Caco-2 (cell line): ENCODE measurements at regions of chr7 and their contacts with region 1.

Region 1: DNA sequence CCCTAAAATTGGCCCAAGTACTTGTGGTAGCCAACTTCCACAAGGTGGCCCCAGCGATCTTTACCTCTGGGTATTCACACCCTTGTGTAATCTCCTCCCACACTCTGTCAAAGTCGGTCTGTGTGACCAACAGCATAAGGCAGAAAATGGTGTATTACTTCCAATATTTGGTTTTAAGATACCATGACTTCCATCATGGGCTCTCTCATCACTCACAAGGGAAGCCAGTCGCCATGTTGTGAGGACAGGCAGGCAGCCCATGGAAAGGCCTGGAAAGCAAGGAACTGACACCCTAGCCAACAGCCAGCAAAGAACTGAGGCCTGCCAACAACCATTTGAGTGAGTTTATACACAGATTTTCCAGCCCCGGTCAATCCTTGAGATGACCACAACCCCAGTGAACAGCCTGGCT is 91.0 kb upstream of the KMT2E start:
- DNase-seq: peak; percentile 76 to 79
- H3K4me3 ChIP-seq: no peak overlapping the region
- H3K4me3 Mint-ChIP-seq: no peak overlapping the region
- H3K27ac Mint-ChIP-seq: no peak overlapping the region
- H3K4me1 ChIP-seq: peaks cover 23% of the 10 kb centered on the region
- H3K4me1 Mint-ChIP-seq: peaks cover 24% of the 10 kb centered on the region
- H3K27me3 ChIP-seq: no peaks in the 10 kb centered on the region
- H3K27me3 Mint-ChIP-seq: no peaks in the 10 kb centered on the region
- CTCF ChIP-seq: peak; percentile 73 to 91

Region 2: DNA sequence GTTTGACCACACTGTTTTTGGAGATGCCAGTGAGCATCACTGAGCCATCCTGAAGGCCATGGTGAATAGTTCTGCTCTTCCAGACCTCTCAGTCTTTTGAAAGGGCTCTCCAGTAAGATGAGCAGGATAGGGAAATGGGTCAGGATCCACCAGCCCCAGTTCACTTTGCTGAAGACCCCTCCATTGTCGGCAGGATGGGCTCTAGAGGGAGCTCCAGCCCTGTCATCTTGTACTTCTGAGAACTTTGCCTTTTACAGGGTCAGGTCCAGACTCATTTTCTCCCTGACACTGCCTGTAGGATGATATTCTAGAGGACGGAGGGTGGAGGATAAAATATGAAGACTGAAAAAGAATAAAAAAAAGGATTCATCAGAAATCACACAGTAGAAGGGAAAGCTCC is 581.5 kb before region 1 on chr7:
- CTCF ChIA-PET with region 1: no interaction called
- POLR2A ChIA-PET with region 1: no interaction called
- intact Hi-C with region 1: loop called (anchors 1 kb)
- DNase-seq: peak; percentile 39 to 48
- H3K4me3 ChIP-seq: no peak overlapping the region
- H3K4me3 Mint-ChIP-seq: no peak overlapping the region
- H3K27ac Mint-ChIP-seq: no peak overlapping the region
- H3K4me1 ChIP-seq: no peaks in the 10 kb centered on the region
- H3K4me1 Mint-ChIP-seq: no peaks in the 10 kb centered on the region
- H3K27me3 ChIP-seq: no peaks in the 10 kb centered on the region
- H3K27me3 Mint-ChIP-seq: peaks cover 5% of the 10 kb centered on the region
- CTCF ChIP-seq: peak; percentile 28 to 61

Region 3: GRCh38 chr7:104883718-104884452 is 39.1 kb before region 1 on chr7:
- CTCF ChIA-PET with region 1: interaction called, 51 read pairs
- POLR2A ChIA-PET with region 1: no interaction called
- intact Hi-C with region 1: loop called (anchors 1 kb)
- DNase-seq: peak; percentile 89 to 92
- H3K4me3 ChIP-seq: no peak overlapping the region
- H3K4me3 Mint-ChIP-seq: peak overlapping the region; percentile 51
- H3K27ac Mint-ChIP-seq: no peak overlapping the region
- H3K4me1 ChIP-seq: 0 out of 2 replicates have a peak, but pooled peaks cover 4% of the 10 kb centered on the region
- H3K4me1 Mint-ChIP-seq: peaks cover 6% of the 10 kb centered on the region
- H3K27me3 ChIP-seq: no peaks in the 10 kb centered on the region
- H3K27me3 Mint-ChIP-seq: peaks cover 3% of the 10 kb centered on the region
- CTCF ChIP-seq: peak; percentile 76 to 96

Region 4: GRCh38 chr7:105013221-105013815 is 90.3 kb after region 1 on chr7:
- CTCF ChIA-PET with region 1: no interaction called
- POLR2A ChIA-PET with region 1: no interaction called
- intact Hi-C with region 1: no loop called
- DNase-seq: peak; percentile 96
- H3K4me3 ChIP-seq: peak overlapping the region; percentile 100
- H3K4me3 Mint-ChIP-seq: peak overlapping the region; percentile 88
- H3K27ac Mint-ChIP-seq: peak overlapping the region; percentile 100
- H3K4me1 ChIP-seq: peaks cover 38% of the 10 kb centered on the region
- H3K4me1 Mint-ChIP-seq: peaks cover 22% of the 10 kb centered on the region
- H3K27me3 ChIP-seq: no peaks in the 10 kb centered on the region
- H3K27me3 Mint-ChIP-seq: no peaks in the 10 kb centered on the region
- CTCF ChIP-seq: peak; percentile 64 to 67

Region 5: DNA sequence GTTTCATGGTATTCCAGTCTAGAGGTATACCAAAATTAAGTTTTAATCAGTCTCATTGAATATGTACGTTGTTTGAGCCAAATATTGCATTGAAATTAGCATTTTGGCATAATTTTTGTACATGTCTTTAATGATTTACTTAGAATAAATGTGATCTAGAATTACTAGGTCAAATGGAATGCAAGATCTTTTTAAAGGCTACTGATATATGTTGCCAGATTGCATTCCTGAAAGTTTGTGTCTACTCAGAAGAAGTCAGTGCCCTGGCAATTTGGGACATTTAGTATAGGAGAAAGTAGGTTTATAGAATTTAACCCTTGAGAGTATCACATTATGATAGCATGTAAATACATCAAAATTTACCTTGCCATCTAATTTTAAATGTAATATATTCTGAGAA is 123.4 kb after region 1 on chr7:
- CTCF ChIA-PET with region 1: interaction called, 3 read pairs
- POLR2A ChIA-PET with region 1: no interaction called
- intact Hi-C with region 1: loop called (anchors 1 kb)
- DNase-seq: no peak
- H3K4me3 ChIP-seq: no peak overlapping the region
- H3K4me3 Mint-ChIP-seq: no peak overlapping the region
- H3K27ac Mint-ChIP-seq: peak overlapping the region; percentile 23
- H3K4me1 ChIP-seq: peaks cover 35% of the 10 kb centered on the region
- H3K4me1 Mint-ChIP-seq: peaks cover 40% of the 10 kb centered on the region
- H3K27me3 ChIP-seq: no peaks in the 10 kb centered on the region
- H3K27me3 Mint-ChIP-seq: no peaks in the 10 kb centered on the region
- CTCF ChIP-seq: no peak

Region 6: GRCh38 chr7:105429746-105430612 is 507.0 kb after region 1 on chr7:
- CTCF ChIA-PET with region 1: no interaction called
- POLR2A ChIA-PET with region 1: no interaction called
- intact Hi-C with region 1: loop called (anchors 1 kb)
- DNase-seq: peak; percentile 46 to 48
- H3K4me3 ChIP-seq: no peak overlapping the region
- H3K4me3 Mint-ChIP-seq: no peak overlapping the region
- H3K27ac Mint-ChIP-seq: no peak overlapping the region
- H3K4me1 ChIP-seq: no peaks in the 10 kb centered on the region
- H3K4me1 Mint-ChIP-seq: no peaks in the 10 kb centered on the region
- H3K27me3 ChIP-seq: no peaks in the 10 kb centered on the region
- H3K27me3 Mint-ChIP-seq: no peaks in the 10 kb centered on the region
- CTCF ChIP-seq: peak; percentile 39 to 60